ENCODE measurements at regions of chr13 and their contacts with region 1.

Region 1: DNA sequence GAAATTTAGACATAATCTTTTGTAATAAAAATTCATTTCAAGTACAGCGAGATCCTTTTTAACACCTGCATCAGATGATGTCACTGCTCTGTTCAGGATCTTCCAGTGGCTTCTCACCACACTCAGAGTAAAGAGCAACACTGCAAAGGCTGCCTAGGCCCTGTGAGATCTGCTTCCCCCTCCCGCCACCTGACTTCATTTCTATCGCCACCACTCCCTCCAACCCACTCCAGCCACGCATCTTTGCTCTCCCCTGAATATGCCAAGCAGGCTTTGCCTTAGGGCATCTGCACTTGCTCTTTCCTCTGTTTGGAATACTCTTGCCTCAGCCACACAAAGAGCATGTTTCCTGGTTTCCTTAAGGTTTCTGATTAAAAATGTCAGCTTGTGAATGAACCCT is 58.3 kb downstream of the MBNL2 start:
- DNase-seq: no peak

Region 2: DNA sequence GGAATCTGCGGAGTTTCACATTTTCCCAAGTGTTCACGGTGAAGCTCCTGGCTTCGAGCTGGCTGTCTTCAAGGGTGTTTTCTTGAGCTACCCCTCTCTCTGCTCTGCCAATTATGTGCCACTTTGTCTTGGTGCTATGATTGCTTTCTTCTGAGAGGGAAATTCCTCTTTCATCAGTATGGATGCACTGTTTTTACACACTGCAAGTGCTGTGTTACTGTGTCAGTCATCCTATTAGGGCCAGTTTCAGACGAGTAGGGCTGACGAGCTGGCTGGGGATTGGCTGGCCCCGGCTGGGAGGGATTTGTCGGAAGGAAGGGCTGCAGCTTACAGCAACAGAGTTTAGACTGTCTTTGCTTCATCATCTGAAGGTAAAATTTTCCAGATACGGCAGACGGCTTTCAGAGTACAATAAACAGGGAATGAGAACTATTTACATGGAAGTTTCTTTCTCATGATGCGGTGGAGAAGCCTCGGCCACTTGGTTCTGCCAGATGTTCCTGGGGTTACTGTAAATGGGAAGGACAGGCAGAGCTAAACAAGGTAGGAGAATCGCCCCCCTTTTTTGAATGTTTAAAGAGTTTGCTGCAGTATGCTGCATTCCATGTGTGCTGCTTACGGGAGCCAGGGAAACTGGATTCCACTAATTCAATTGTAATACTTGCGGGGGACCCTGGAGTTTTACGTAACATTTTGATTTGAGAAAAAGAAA is 58.3 kb before region 1 on chr13 and contains the start of gene MBNL2:
- intact Hi-C with region 1: loop called in 1 of 2 experiments (anchors 10 kb)
- DNase-seq: peak; percentile 96
- total RNA-seq, gene MBNL2: 106 to 139 TPM

Region 3: DNA sequence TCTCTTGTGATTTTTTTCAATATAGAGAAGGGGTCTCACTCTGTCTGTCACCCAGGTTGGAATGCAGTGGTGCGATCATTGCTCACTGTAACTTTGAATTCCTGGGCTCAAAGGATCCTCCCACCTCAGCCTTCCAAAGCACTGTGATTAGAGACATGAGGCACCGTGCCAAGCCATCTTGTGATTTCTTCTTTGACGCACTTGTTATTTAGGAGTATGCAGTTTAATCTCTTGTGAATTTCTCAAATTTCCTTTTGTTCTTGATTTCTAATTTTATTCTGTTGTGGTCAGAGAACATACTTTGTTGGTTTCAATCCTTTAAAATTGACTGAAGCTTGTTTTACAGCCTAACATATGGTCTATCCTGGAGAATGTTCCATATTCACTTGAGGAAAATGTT is 687.5 kb after region 1 on chr13:
- intact Hi-C with region 1: loop called in 1 of 2 experiments (anchors 5 kb)
- DNase-seq: no peak